ENCODE measurements at regions of chr16 and their contacts with region 1.

Region 1: DNA sequence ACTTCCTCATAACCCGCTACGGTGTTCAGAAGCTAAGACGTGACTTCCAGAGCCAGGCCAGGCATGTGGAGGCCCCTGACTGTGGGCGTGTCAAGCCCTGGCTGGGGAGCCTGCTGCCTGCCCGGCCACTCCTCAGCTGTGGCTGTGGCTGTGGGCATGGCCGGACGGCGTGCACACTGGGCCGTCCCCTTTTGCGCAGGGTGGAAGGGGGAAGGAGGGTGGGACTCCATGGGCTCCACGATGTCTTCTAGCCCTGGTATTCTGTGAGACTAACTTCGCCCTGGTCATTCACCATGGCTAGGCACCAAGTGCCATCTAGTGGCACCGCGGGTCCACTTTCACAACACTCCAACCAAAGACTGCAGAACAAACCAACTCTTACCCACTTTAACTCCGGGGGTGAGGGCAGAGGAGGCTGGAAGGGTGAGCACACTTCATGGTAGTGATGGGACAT is 67.9 kb downstream of the N4BP1 start:
- DNase-seq: peak; percentile 84 to 85
- H3K4me3 ChIP-seq: no peak overlapping the region
- H3K27ac ChIP-seq: peak overlapping the region; percentile 46
- H3K4me1 ChIP-seq: peaks cover 37% of the 10 kb centered on the region
- H3K27me3 ChIP-seq: no peaks in the 10 kb centered on the region
- CTCF ChIP-seq: peak; percentile 5 to 45 (median 45)
- POLR2A ChIP-seq: no peak

Region 2: GRCh38 chr16:48353565-48354163 is 188.4 kb before region 1 on chr16:
- intact Hi-C with region 1: loop called (anchors 10 kb)
- DNase-seq: no peak
- H3K4me3 ChIP-seq: no peak overlapping the region
- H3K27ac ChIP-seq: no peak overlapping the region
- H3K4me1 ChIP-seq: no peaks in the 10 kb centered on the region
- H3K27me3 ChIP-seq: no peaks in the 10 kb centered on the region
- CTCF ChIP-seq: peak; percentile 77 to 92 (median 79)
- POLR2A ChIP-seq: no peak

Region 3: GRCh38 chr16:48609652-48610029 is 67.6 kb after region 1 on chr16:
- intact Hi-C with region 1: no loop called
- DNase-seq: peak in 1 of 2 donors; percentile 85
- H3K4me3 ChIP-seq: peak overlapping the region; percentile 96 to 100
- H3K27ac ChIP-seq: peak overlapping the region; percentile 86
- H3K4me1 ChIP-seq: peaks cover 73% of the 10 kb centered on the region
- H3K27me3 ChIP-seq: no peaks in the 10 kb centered on the region
- CTCF ChIP-seq: no peak
- POLR2A ChIP-seq: no peak